Esophagus muscularis mucosa (tissue), 4 donors: ENCODE measurements at regions of chr14 and their contacts with region 1.

Region 1: DNA sequence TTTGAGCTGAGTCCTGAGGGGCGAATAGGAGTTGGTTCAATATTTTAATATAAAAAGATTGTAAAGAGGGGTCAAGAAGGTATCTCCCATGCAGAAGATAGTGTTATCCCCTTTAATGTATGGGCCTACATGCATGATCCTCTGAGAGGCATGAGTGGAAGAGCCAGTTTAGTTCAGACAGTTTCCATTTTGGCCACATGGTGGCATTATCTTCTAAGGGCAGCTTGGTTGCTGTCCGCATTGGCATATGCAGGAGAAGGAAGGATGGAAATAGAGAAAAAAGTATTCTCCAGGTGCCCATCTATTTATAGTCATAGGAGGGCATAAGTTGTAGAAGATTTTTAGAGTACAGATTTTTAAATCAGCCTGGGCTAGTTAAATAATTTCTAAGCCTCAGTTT is 5.4 kb downstream of the SAMD4A start:
- DNase-seq: no peak
- H3K4me3 ChIP-seq: no peak overlapping the region
- H3K27ac ChIP-seq: no peak overlapping the region
- H3K4me1 ChIP-seq: peaks cover 55 to 76% (median 74%) of the 10 kb centered on the region in 4 donors
- H3K27me3 ChIP-seq: no peaks in the 10 kb centered on the region
- CTCF ChIP-seq: peak in 2 of 3 experiments; percentile 19 to 43
- EP300 ChIP-seq: no peak
- POLR2A ChIP-seq: no peak

Region 2: GRCh38 chr14:54411371-54411770 is 160.9 kb before region 1 on chr14:
- intact Hi-C with region 1: no loop called
- DNase-seq: no peak
- H3K4me3 ChIP-seq: no peak overlapping the region
- H3K27ac ChIP-seq: no peak overlapping the region
- H3K4me1 ChIP-seq: no peaks in the 10 kb centered on the region
- H3K27me3 ChIP-seq: no peaks in the 10 kb centered on the region
- CTCF ChIP-seq: no peak
- EP300 ChIP-seq: no peak
- POLR2A ChIP-seq: no peak

Region 3: DNA sequence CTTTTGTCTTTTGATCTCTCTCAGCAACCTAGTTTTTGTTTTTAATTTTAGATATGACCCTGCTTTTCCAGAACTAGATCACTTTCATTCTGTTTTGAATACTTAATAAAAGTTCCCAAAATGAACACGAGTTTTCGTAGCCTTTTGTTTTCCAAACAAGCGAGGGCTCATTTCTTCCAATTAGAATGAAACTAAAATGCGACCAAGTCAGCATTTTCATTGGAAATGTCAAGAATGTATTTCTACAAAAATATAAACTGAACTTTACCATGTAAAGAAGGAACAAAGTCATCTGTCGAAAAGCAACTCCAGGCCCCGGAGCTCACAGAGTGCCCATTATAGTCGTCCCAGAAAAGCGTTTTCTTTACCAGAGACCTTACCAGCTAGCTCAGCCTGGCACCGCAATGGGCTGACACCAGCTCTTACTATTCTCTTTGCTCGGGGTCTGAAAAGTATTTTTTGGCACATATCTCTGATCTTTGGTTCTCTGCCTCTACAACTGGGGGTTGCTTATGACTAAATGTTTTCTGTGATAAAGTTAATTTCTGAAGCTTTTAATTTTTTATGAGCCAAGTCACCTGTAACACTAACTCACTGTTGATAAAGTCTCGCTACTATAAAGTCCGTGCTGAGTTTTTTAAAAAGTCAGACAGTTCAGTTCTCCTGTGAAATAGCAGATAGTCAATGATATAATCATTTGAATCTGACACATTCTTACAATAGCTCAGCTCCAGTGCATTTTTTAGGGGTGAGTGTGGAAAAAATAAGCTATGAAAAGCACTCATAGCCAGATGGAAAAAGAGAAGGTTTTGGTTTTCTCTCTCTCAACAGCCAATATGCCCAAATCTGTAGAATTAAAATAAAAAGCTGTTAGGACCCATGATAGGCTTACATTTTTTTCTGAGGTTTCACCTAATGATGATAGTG is 38.0 kb after region 1 on chr14:
- intact Hi-C with region 1: loop called (anchors 5 kb)
- DNase-seq: no peak
- H3K4me3 ChIP-seq: peak overlapping the region in 2 of 4 donors; percentile 8 to 17
- H3K27ac ChIP-seq: peak overlapping the region; percentile 38 to 71 (median 62)
- H3K4me1 ChIP-seq: peaks cover 29 to 48% (median 45%) of the 10 kb centered on the region in 4 donors
- H3K27me3 ChIP-seq: no peaks in the 10 kb centered on the region
- CTCF ChIP-seq: no peak
- EP300 ChIP-seq: no peak
- POLR2A ChIP-seq: no peak

Region 4: GRCh38 chr14:54792288-54792687 is 220.0 kb after region 1 on chr14:
- intact Hi-C with region 1: no loop called
- DNase-seq: no peak
- H3K4me3 ChIP-seq: no peak overlapping the region
- H3K27ac ChIP-seq: no peak overlapping the region
- H3K4me1 ChIP-seq: peaks cover 0 to 16% (median 0%) of the 10 kb centered on the region in 4 donors
- H3K27me3 ChIP-seq: no peaks in the 10 kb centered on the region
- CTCF ChIP-seq: no peak
- EP300 ChIP-seq: no peak
- POLR2A ChIP-seq: no peak